Mammary epithelial cell (primary cell): ENCODE measurements at regions of chr3 and their contacts with region 1.

Region 1: DNA sequence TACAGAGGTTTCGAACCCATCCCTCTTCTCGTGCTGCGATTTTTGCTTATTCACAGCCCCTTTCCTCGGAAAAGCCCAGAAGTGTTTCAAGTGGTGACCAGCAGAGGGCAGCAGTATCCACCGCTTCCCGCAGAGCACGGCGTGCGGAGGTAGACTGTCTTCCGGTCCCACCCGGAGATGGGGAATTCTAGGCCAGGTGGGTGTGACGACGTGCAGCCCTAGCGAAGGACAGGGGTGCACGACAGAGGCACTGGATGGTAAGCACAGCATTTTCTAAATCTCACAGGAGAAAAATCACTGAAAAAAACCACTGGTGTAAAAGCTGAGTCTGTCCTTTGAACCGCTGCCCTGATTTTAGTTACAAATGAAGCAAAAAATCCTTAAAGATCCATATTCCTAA is 7.4 kb upstream of the PSMD6 start:
- DNase-seq: peak; percentile 58
- H3K4me3 ChIP-seq: peak overlapping the region in 1 of 3 experiments; percentile 6
- H3K27ac ChIP-seq: peak overlapping the region; percentile 16
- H3K4me1 ChIP-seq: peaks cover 9% of the 10 kb centered on the region
- H3K27me3 ChIP-seq: no peaks in the 10 kb centered on the region
- CTCF ChIP-seq: peak; percentile 64 to 94

Region 2: GRCh38 chr3:64073158-64073761 is 42.5 kb after region 1 on chr3:
- CTCF ChIA-PET with region 1: no interaction called
- dilution Hi-C with region 1: no loop called
- in situ Hi-C with region 1: no loop called
- intact Hi-C with region 1: loop called (anchors 5 kb)
- DNase-seq: no peak
- H3K4me3 ChIP-seq: no peak overlapping the region
- H3K27ac ChIP-seq: no peak overlapping the region
- H3K4me1 ChIP-seq: peaks cover under 1% of the 10 kb centered on the region
- H3K27me3 ChIP-seq: no peaks in the 10 kb centered on the region
- CTCF ChIP-seq: peak in 1 of 2 donors; percentile 14

Region 3: GRCh38 chr3:64163755-64164148 is 133.0 kb after region 1 on chr3:
- CTCF ChIA-PET with region 1: no interaction called
- dilution Hi-C with region 1: no loop called
- in situ Hi-C with region 1: no loop called
- intact Hi-C with region 1: loop called (anchors 1 kb)
- DNase-seq: peak; percentile 92
- H3K4me3 ChIP-seq: peak overlapping the region; percentile 5 to 21 (median 9)
- H3K27ac ChIP-seq: peak overlapping the region; percentile 94
- H3K4me1 ChIP-seq: peaks cover 63% of the 10 kb centered on the region
- H3K27me3 ChIP-seq: no peaks in the 10 kb centered on the region
- CTCF ChIP-seq: no peak

Region 4: GRCh38 chr3:64462203-64462602 is 431.5 kb after region 1 on chr3:
- CTCF ChIA-PET with region 1: no interaction called
- dilution Hi-C with region 1: loop called (anchors 25 kb)
- in situ Hi-C with region 1: loop called in 1 of 2 experiments (anchors 10 kb)
- intact Hi-C with region 1: loop called (anchors 1 kb)
- DNase-seq: no peak
- H3K4me3 ChIP-seq: no peak overlapping the region
- H3K27ac ChIP-seq: no peak overlapping the region
- H3K4me1 ChIP-seq: peaks cover 2% of the 10 kb centered on the region
- H3K27me3 ChIP-seq: no peaks in the 10 kb centered on the region
- CTCF ChIP-seq: no peak

Region 5: DNA sequence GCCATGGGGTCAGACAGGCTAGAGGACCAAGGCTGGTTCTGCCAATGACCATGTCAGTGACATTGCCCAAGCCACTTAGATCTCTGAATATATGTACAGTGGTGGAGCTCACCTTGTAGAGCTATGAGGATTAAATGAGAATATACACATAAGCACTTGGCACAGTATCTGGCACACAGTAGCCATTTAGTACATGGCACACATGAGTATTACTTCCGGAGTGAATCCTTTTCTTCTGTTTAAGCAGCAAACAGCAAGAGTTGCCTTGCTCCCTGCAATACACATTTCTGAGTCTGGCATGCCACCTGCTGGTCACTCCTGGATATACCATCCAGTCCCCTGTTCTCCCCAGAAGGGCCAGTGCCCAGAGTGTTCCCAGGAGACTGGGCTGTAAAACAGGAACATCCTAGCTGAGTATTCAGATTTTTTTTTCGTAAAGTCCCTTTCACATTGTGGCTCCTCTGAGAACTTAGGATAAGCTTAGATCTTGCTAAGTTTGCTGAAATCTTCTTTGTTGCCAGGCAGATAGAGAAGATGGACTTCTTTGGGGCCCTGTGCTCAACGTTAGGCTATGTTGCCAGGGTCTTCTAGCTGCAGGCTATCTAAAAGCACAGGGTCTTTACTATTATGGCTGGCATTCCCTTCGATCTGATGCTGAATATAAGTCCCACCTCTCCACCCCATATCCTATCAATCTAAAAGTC is 453.7 kb after region 1 on chr3:
- CTCF ChIA-PET with region 1: interaction called, 3 read pairs
- dilution Hi-C with region 1: no loop called
- in situ Hi-C with region 1: loop called in 1 of 2 experiments (anchors 10 kb)
- intact Hi-C with region 1: loop called (anchors 1 kb)
- DNase-seq: peak; percentile 58
- H3K4me3 ChIP-seq: no peak overlapping the region
- H3K27ac ChIP-seq: no peak overlapping the region
- H3K4me1 ChIP-seq: peaks cover 4% of the 10 kb centered on the region
- H3K27me3 ChIP-seq: no peaks in the 10 kb centered on the region
- CTCF ChIP-seq: peak; percentile 73 to 88